ENCODE measurements at regions of chr18 and their contacts with region 1.

Region 1: GRCh38 chr18:41899535-41899934 is 55.5 kb upstream of the PIK3C3 start:
- DNase-seq: no peak
- H3K4me3 ChIP-seq: no peak overlapping the region
- H3K27ac ChIP-seq: no peak overlapping the region
- H3K4me1 ChIP-seq: no peaks in the 10 kb centered on the region
- H3K27me3 ChIP-seq: no peaks in the 10 kb centered on the region
- CTCF ChIP-seq: peak in 1 of 2 donors; percentile 43

Region 2: GRCh38 chr18:41767960-41768359 is 131.6 kb before region 1 on chr18:
- CTCF ChIA-PET with region 1: no interaction called
- dilution Hi-C with region 1: no loop called
- in situ Hi-C with region 1: loop called (anchors 5 kb)
- intact Hi-C with region 1: loop called (anchors 1 kb)
- DNase-seq: peak; percentile 52
- H3K4me3 ChIP-seq: no peak overlapping the region
- H3K27ac ChIP-seq: no peak overlapping the region
- H3K4me1 ChIP-seq: peaks cover 2% of the 10 kb centered on the region
- H3K27me3 ChIP-seq: no peaks in the 10 kb centered on the region
- CTCF ChIP-seq: peak; percentile 38 to 69

Region 3: GRCh38 chr18:41789001-41789400 is 110.5 kb before region 1 on chr18:
- CTCF ChIA-PET with region 1: interaction called, 10 read pairs
- dilution Hi-C with region 1: no loop called
- in situ Hi-C with region 1: no loop called
- intact Hi-C with region 1: no loop called
- DNase-seq: no peak
- H3K4me3 ChIP-seq: no peak overlapping the region
- H3K27ac ChIP-seq: no peak overlapping the region
- H3K4me1 ChIP-seq: peaks cover 15% of the 10 kb centered on the region
- H3K27me3 ChIP-seq: no peaks in the 10 kb centered on the region
- CTCF ChIP-seq: no peak

Region 4: GRCh38 chr18:41999751-42000150 is 100.2 kb after region 1 on chr18:
- CTCF ChIA-PET with region 1: no interaction called
- dilution Hi-C with region 1: no loop called
- in situ Hi-C with region 1: no loop called
- intact Hi-C with region 1: no loop called
- DNase-seq: no peak
- H3K4me3 ChIP-seq: no peak overlapping the region
- H3K27ac ChIP-seq: no peak overlapping the region
- H3K4me1 ChIP-seq: no peaks in the 10 kb centered on the region
- H3K27me3 ChIP-seq: no peaks in the 10 kb centered on the region
- CTCF ChIP-seq: no peak